GM12878 (cell line): ENCODE measurements at regions of chr6 and their contacts with region 1.

Region 1: GRCh38 chr6:118565311-118565960 is 17.3 kb downstream of the PLN start:
- DNase-seq: peak; percentile 65
- ATAC-seq: peak; percentile 100
- H3K4me3 ChIP-seq: no peak overlapping the region
- H3K27ac ChIP-seq: no peak overlapping the region
- H3K4me1 ChIP-seq: peaks cover 2% of the 10 kb centered on the region; the same call in 1 of the 2 replicates
- H3K27me3 ChIP-seq: no peaks in the 10 kb centered on the region
- CTCF ChIP-seq: peak; percentile 68 to 91 (median 80)
- EP300 ChIP-seq: no peak
- POLR2A ChIP-seq: no peak
- RAD21 ChIP-seq: peak; percentile 95

Region 2: DNA sequence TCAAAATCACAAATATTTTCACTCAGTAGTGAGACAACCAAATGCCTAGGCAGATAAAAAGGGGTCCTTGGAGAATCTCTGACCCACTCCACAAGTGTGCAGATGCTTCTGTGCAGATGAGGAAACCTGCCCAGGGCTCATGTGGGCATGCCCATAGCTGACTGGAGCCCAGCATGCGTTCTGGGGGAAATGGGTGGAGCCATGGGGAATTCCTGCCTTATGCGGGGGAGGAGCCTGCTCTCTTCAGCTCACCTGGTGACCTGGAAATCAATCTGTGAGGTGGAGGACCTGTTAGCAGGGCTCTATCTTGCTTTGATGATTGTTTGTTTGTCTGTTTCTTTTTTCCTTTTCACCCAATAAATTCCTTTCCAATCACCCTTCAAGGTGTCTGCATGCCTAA is 40.8 kb before region 1 on chr6:
- CTCF ChIA-PET with region 1: no interaction called
- POLR2A ChIA-PET with region 1: no interaction called
- RAD21 ChIA-PET with region 1: no interaction called
- SMC1A ChIA-PET with region 1: no interaction called
- in situ Hi-C with region 1: no loop called
- intact Hi-C with region 1: no loop called
- DNase-seq: no peak
- ATAC-seq: no peak; the same call in 2 of the 3 replicates
- H3K4me3 ChIP-seq: no peak overlapping the region
- H3K27ac ChIP-seq: no peak overlapping the region
- H3K4me1 ChIP-seq: no peaks in the 10 kb centered on the region
- H3K27me3 ChIP-seq: no peaks in the 10 kb centered on the region
- CTCF ChIP-seq: no peak
- EP300 ChIP-seq: no peak
- POLR2A ChIP-seq: no peak
- RAD21 ChIP-seq: no peak

Region 3: GRCh38 chr6:118580585-118581419 is 15.4 kb after region 1 on chr6:
- CTCF ChIA-PET with region 1: interaction called, 35 read pairs
- POLR2A ChIA-PET with region 1: no interaction called
- RAD21 ChIA-PET with region 1: interaction called, 15 read pairs
- SMC1A ChIA-PET with region 1: interaction called, 42 read pairs
- in situ Hi-C with region 1: no loop called
- intact Hi-C with region 1: no loop called
- DNase-seq: no peak
- ATAC-seq: peak; percentile 85
- H3K4me3 ChIP-seq: no peak overlapping the region
- H3K27ac ChIP-seq: no peak overlapping the region
- H3K4me1 ChIP-seq: no peaks in the 10 kb centered on the region
- H3K27me3 ChIP-seq: no peaks in the 10 kb centered on the region
- CTCF ChIP-seq: peak; percentile 40 to 64 (median 48); a peak in 5 of 6 replicates
- EP300 ChIP-seq: no peak
- POLR2A ChIP-seq: no peak
- RAD21 ChIP-seq: peak; percentile 57

Region 4: GRCh38 chr6:118618679-118619377 is 53.4 kb after region 1 on chr6:
- CTCF ChIA-PET with region 1: interaction called, 54 read pairs
- POLR2A ChIA-PET with region 1: no interaction called
- RAD21 ChIA-PET with region 1: interaction called, 12 read pairs
- SMC1A ChIA-PET with region 1: interaction called, 12 read pairs
- in situ Hi-C with region 1: no loop called
- intact Hi-C with region 1: loop called (anchors 1 kb)
- DNase-seq: no peak
- ATAC-seq: peak; percentile 98
- H3K4me3 ChIP-seq: no peak overlapping the region
- H3K27ac ChIP-seq: no peak overlapping the region
- H3K4me1 ChIP-seq: no peaks in the 10 kb centered on the region
- H3K27me3 ChIP-seq: no peaks in the 10 kb centered on the region
- CTCF ChIP-seq: peak; percentile 92 to 96 (median 92)
- EP300 ChIP-seq: no peak
- POLR2A ChIP-seq: no peak
- RAD21 ChIP-seq: peak; percentile 88

Region 5: DNA sequence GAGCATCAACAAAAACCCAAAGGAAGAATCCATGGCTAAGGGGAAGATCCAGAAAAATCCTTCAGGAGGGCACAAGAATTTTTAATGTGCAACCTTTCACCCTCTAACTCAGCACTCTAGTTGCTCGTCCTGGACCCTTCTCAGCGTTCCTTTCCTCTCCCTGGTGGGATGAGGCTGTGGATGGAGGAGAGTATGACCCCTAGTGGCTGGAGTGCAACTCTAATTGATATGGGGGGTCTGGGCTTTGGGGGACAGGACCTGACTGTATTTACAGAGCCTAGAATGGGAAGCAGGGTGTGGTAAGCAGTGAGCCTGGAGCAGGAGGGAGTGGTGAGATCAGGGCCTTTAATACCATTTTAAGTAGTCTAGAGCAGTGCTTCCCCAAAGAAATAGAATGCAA is 169.9 kb after region 1 on chr6:
- CTCF ChIA-PET with region 1: interaction called, 11 read pairs
- POLR2A ChIA-PET with region 1: no interaction called
- RAD21 ChIA-PET with region 1: interaction called, 4 read pairs
- SMC1A ChIA-PET with region 1: interaction called, 8 read pairs
- in situ Hi-C with region 1: no loop called
- intact Hi-C with region 1: loop called (anchors 1 kb)
- DNase-seq: no peak
- ATAC-seq: peak; percentile 57
- H3K4me3 ChIP-seq: no peak overlapping the region
- H3K27ac ChIP-seq: no peak overlapping the region
- H3K4me1 ChIP-seq: no peaks in the 10 kb centered on the region
- H3K27me3 ChIP-seq: no peaks in the 10 kb centered on the region
- CTCF ChIP-seq: peak; percentile 34 to 52 (median 49); a peak in 5 of 6 replicates
- EP300 ChIP-seq: no peak
- POLR2A ChIP-seq: no peak
- RAD21 ChIP-seq: peak; percentile 64

Region 6: DNA sequence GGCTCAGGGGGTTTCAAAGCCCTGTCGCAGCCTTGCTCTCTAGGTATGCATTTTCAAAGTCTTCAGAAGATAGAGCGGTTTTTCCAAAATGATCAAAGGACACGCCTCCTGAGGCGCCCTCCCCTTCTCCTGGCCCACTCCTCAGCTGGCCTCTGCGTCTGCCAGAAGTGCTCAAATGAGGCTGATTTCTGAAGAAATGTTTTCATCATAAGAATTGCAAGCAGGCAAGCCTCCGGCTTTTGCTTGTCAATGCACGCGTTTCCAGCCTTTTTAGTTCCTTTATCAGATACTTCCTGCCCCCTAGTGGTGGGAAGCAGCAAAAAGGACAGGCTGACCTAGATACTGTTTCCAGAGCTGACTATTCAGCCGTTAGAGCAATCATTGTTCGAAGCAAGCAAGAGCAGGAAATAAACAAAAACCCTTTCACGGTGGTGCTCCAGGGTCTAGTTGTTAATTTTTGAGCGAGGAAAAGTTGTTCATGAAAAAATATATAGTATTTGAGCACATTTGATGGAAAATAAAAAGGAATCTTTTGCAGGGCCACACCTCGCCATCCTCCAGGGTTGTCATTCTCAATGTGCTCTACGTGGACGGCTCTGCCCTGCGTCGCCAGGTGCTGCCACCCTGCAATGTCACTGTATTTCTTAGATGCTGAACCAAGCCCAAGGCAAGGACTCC is 235.1 kb after region 1 on chr6:
- CTCF ChIA-PET with region 1: interaction called, 40 read pairs
- POLR2A ChIA-PET with region 1: no interaction called
- RAD21 ChIA-PET with region 1: interaction called, 13 read pairs
- SMC1A ChIA-PET with region 1: interaction called, 14 read pairs
- in situ Hi-C with region 1: no loop called
- intact Hi-C with region 1: loop called (anchors 1 kb)
- DNase-seq: peak; percentile 25
- ATAC-seq: peak; percentile 98
- H3K4me3 ChIP-seq: no peak overlapping the region
- H3K27ac ChIP-seq: no peak overlapping the region
- H3K4me1 ChIP-seq: no peaks in the 10 kb centered on the region
- H3K27me3 ChIP-seq: no peaks in the 10 kb centered on the region
- CTCF ChIP-seq: peak; percentile 81 to 96 (median 82)
- EP300 ChIP-seq: no peak
- POLR2A ChIP-seq: no peak
- RAD21 ChIP-seq: peak; percentile 80

Region 7: DNA sequence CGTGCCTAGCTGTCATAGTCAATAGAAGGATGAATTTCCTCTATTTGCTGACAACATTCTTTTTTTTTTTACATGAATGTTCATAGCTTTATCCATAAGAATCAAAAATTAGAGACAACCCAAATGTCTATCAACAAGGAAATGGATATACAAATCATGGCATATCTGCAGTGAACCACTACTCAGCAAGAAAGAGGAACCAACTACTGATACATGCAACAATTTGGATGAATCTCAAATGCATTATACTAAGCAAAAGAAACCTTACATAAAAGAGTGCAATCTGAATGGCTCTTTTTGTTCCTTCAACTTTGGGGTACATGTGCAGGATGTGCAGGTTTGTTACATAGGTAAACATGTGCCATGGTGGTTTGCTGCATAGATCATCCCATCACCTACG is 387.2 kb after region 1 on chr6:
- CTCF ChIA-PET with region 1: no interaction called
- POLR2A ChIA-PET with region 1: no interaction called
- RAD21 ChIA-PET with region 1: no interaction called
- SMC1A ChIA-PET with region 1: no interaction called
- in situ Hi-C with region 1: no loop called
- intact Hi-C with region 1: no loop called
- DNase-seq: no peak
- ATAC-seq: no peak
- H3K4me3 ChIP-seq: no peak overlapping the region
- H3K27ac ChIP-seq: no peak overlapping the region
- H3K4me1 ChIP-seq: no peaks in the 10 kb centered on the region
- H3K27me3 ChIP-seq: no peaks in the 10 kb centered on the region
- CTCF ChIP-seq: no peak
- EP300 ChIP-seq: no peak
- POLR2A ChIP-seq: no peak
- RAD21 ChIP-seq: no peak